A549 (cell line): ENCODE measurements at regions of chrX and their contacts with region 1.

Region 1: GRCh38 chrX:45801554-45801953 is 600.9 kb upstream of the DIPK2B start:
- DNase-seq: peak in 1 of 2 experiments; percentile 62
- ATAC-seq: peak; percentile 69 to 81; a peak in 5 of 6 replicates
- H3K4me3 ChIP-seq: peak overlapping the region; percentile 33
- H3K27ac ChIP-seq: peak overlapping the region; percentile 84 to 91
- H3K4me1 ChIP-seq: peaks cover 90% of the 10 kb centered on the region
- CTCF ChIP-seq: peak; percentile 48
- EP300 ChIP-seq: no peak
- POLR2A ChIP-seq: no peak
- RAD21 ChIP-seq: peak; percentile 29 to 53; a peak in 4 of 5 replicates

Region 2: DNA sequence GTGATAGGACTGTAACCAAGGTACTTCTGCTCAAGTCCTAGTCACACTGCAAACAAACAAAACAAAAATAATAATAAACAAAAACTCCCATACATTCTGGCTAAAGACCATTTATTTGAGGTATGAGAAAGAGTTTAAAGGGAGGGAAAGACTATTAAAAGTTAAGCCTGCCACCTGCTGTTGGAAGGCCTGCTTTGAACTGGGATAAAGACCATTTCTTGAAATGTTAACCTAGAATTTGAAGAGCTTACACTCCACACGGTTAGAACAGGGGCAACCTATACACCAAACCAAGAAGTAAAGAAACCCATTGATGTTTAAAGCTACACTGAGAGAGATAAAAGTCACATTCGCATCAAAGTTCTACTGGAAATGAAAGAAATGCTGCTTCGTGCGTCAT is 52.2 kb before region 1 on chrX:
- CTCF ChIA-PET with region 1: no interaction called
- POLR2A ChIA-PET with region 1: no interaction called
- DNase-seq: no peak
- ATAC-seq: peak in 1 of 2 experiments; percentile 35; a peak in 2 of 6 replicates
- H3K4me3 ChIP-seq: no peak overlapping the region
- H3K27ac ChIP-seq: peak overlapping the region; percentile 44 to 61; a peak in 3 of 6 replicates
- H3K4me1 ChIP-seq: peaks cover 50% of the 10 kb centered on the region
- CTCF ChIP-seq: peak; percentile 33
- EP300 ChIP-seq: no peak
- POLR2A ChIP-seq: no peak
- RAD21 ChIP-seq: peak; percentile 44 to 52

Region 3: GRCh38 chrX:45774961-45775360 is 26.6 kb before region 1 on chrX:
- CTCF ChIA-PET with region 1: interaction called, 10 read pairs
- POLR2A ChIA-PET with region 1: interaction called, 4 read pairs
- DNase-seq: no peak
- ATAC-seq: no peak
- H3K4me3 ChIP-seq: peak overlapping the region; percentile 6; the same call in 1 of the 3 replicates
- H3K27ac ChIP-seq: peak overlapping the region; percentile 49 to 78; a peak in 5 of 6 replicates
- H3K4me1 ChIP-seq: peaks cover 83% of the 10 kb centered on the region
- CTCF ChIP-seq: no peak
- EP300 ChIP-seq: no peak
- POLR2A ChIP-seq: no peak
- RAD21 ChIP-seq: no peak

Region 4: GRCh38 chrX:45781901-45782553 is 19.5 kb before region 1 on chrX:
- CTCF ChIA-PET with region 1: interaction called, 11 read pairs
- POLR2A ChIA-PET with region 1: no interaction called
- DNase-seq: peak; percentile 43 to 71
- ATAC-seq: peak; percentile 93 to 96
- H3K4me3 ChIP-seq: no peak overlapping the region
- H3K27ac ChIP-seq: peak overlapping the region; percentile 62 to 87
- H3K4me1 ChIP-seq: peaks cover 65% of the 10 kb centered on the region
- CTCF ChIP-seq: peak; percentile 39; the same call in 2 of the 3 replicates
- EP300 ChIP-seq: no peak
- POLR2A ChIP-seq: no peak
- RAD21 ChIP-seq: peak; percentile 50 to 54

Region 5: DNA sequence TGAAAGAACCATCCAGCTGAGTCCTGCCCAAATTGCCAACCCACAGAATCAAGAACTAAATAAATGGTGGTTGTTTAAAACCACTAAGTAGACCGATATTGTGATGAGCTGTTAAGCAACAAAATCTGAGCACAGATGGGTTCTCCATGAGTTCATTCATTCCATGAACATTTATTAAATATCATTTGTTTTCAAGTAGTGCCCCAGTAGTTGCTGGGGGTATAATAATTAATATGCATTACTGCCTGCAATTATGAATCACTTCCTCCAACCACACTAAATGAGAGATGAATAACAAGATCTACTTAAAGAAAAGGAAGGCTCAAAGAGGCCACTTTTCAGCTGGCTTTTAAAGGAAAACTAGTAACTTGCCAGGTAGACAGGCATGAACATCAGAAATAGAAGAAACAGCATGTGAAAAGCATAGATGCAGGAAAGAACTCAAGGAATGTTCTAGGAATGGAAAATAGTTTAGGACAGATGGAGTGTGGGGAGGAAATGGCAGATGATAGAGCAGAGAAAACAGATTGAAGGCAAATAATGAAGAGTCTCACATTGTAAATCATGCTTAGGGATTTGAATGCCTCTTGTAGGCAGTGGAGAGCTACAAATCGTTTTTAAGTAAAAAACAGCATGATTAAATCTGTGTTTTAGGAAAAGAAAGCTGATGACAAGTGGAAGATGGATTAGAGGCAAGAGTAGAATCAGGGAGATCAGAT is 40.8 kb after region 1 on chrX:
- CTCF ChIA-PET with region 1: interaction called, 11 read pairs
- POLR2A ChIA-PET with region 1: interaction called, 3 read pairs
- DNase-seq: no peak
- ATAC-seq: no peak
- H3K4me3 ChIP-seq: no peak overlapping the region
- H3K27ac ChIP-seq: peak overlapping the region in 1 of 2 experiments; percentile 64; a peak in 3 of 6 replicates
- H3K4me1 ChIP-seq: peaks cover 66% of the 10 kb centered on the region
- CTCF ChIP-seq: no peak
- EP300 ChIP-seq: no peak
- POLR2A ChIP-seq: no peak
- RAD21 ChIP-seq: no peak

Region 6: GRCh38 chrX:45935408-45935807 is 133.9 kb after region 1 on chrX:
- CTCF ChIA-PET with region 1: no interaction called
- POLR2A ChIA-PET with region 1: no interaction called
- DNase-seq: no peak
- ATAC-seq: no peak
- H3K4me3 ChIP-seq: no peak overlapping the region
- H3K27ac ChIP-seq: no peak overlapping the region
- H3K4me1 ChIP-seq: no peaks in the 10 kb centered on the region
- CTCF ChIP-seq: no peak
- EP300 ChIP-seq: no peak
- POLR2A ChIP-seq: no peak
- RAD21 ChIP-seq: no peak

Region 7: GRCh38 chrX:46408553-46409407 is 607.2 kb after region 1 on chrX:
- CTCF ChIA-PET with region 1: interaction called, 11 read pairs
- POLR2A ChIA-PET with region 1: no interaction called
- DNase-seq: peak; percentile 35 to 76
- ATAC-seq: peak; percentile 64 to 72
- H3K4me3 ChIP-seq: no peak overlapping the region
- H3K27ac ChIP-seq: peak overlapping the region; percentile 28 to 58; a peak in 5 of 6 replicates
- H3K4me1 ChIP-seq: peaks cover 7% of the 10 kb centered on the region; the same call in 1 of the 3 replicates
- CTCF ChIP-seq: peak; percentile 89
- EP300 ChIP-seq: no peak
- POLR2A ChIP-seq: no peak
- RAD21 ChIP-seq: peak; percentile 94 to 96